ENCODE measurements at regions of chr7 and their contacts with region 1.

Region 1: GRCh38 chr7:12686894-12687717 is at the start of gene ARL4A:
- DNase-seq: peak; percentile 86 to 90 (median 88)
- H3K4me3 ChIP-seq: peak within 1 kb of the TSS; percentile 61 to 89
- H3K4me3 Mint-ChIP-seq: peak within 1 kb of the TSS; percentile 94 to 100 (median 96)
- H3K27ac ChIP-seq: peak within 1 kb of the TSS; percentile 94
- H3K27ac Mint-ChIP-seq: peak within 1 kb of the TSS; percentile 91 to 99 (median 97)
- H3K4me1 ChIP-seq: peaks cover 21% of the 10 kb centered on the region
- H3K4me1 Mint-ChIP-seq: peaks cover 24 to 57% (median 36%) of the 10 kb centered on the region in 4 donors
- H3K27me3 ChIP-seq: no peaks in the 10 kb centered on the region
- H3K27me3 Mint-ChIP-seq: no peaks in the 10 kb centered on the region
- total RNA-seq, gene ARL4A: 11.6 to 12.9 TPM

Region 2: GRCh38 chr7:12211054-12211710 is 475.9 kb before region 1 on chr7 and contains the start of gene TMEM106B:
- CTCF ChIA-PET with region 1: no interaction called
- POLR2A ChIA-PET with region 1: interaction called, 4 read pairs
- intact Hi-C with region 1: loop called (anchors 2 kb)
- DNase-seq: peak; percentile 95 to 98 (median 98)
- H3K4me3 ChIP-seq: peak within 1 kb of the TSS; percentile 70 to 94
- H3K4me3 Mint-ChIP-seq: peak within 1 kb of the TSS; percentile 92 to 100 (median 98)
- H3K27ac ChIP-seq: peak within 1 kb of the TSS; percentile 98
- H3K27ac Mint-ChIP-seq: peak within 1 kb of the TSS; percentile 95 to 100 (median 100)
- H3K4me1 ChIP-seq: peaks cover 46% of the 10 kb centered on the region
- H3K4me1 Mint-ChIP-seq: peaks cover 23 to 40% (median 33%) of the 10 kb centered on the region in 4 donors
- H3K27me3 ChIP-seq: no peaks in the 10 kb centered on the region
- H3K27me3 Mint-ChIP-seq: peaks cover 0 to 2% of the 10 kb centered on the region in 2 donors
- total RNA-seq, gene TMEM106B: 56.9 to 62.2 TPM

Region 3: DNA sequence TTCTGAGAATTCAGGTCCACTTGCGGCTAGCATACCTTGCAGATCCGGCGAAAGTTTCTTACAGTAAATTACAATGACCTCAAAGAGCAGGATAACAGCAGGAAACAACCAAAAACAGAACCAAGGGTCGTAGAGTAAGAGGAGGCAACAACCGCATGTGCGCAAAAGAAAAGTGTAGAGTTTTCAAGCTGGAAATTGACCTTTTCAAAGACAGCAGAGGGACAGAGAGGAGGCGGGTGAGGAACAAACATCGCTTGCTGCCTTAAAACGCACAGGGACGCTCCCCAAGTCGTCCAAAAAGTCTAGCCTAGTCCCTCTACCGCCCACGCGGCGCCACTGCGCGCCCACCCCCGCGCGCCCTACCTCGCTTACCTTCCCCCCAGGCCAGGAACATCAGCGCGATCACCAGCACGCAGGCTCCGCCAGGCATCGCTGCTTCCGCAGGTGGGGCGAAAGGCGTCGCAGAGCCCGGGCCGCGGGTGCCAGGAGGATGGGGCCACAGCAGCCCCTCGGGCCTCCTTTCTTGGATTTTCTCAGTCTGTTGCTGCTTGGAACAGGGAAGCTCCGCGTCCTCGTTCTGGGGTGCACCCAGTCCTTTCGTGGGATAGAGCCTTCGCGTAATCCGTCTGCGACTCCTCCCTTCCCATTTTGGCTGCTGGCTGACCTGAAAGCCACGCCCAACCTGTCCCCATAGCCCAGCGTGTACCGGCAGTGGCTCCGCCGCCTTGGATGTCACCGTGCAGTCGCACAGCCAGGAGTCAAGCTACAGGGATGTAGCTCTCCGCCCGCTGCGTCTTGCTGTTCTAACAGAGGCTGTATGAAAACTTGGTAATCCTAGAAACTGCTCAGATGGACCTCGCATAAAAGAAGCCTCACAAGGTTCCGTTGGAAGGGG is 283.6 kb before region 1 on chr7 and contains the start of gene VWDE:
- CTCF ChIA-PET with region 1: no interaction called
- POLR2A ChIA-PET with region 1: no interaction called
- intact Hi-C with region 1: loop called (anchors 1 kb)
- DNase-seq: peak; percentile 31 to 70 (median 44)
- H3K4me3 ChIP-seq: peak within 1 kb of the TSS; percentile 38 to 54
- H3K4me3 Mint-ChIP-seq: peak within 1 kb of the TSS; percentile 82 to 95 (median 90)
- H3K27ac ChIP-seq: peak within 1 kb of the TSS; percentile 29
- H3K27ac Mint-ChIP-seq: peak within 1 kb of the TSS; percentile 30 to 92 (median 82)
- H3K4me1 ChIP-seq: peaks cover 13% of the 10 kb centered on the region
- H3K4me1 Mint-ChIP-seq: peaks cover 12 to 29% (median 17%) of the 10 kb centered on the region in 4 donors
- H3K27me3 ChIP-seq: no peaks in the 10 kb centered on the region
- H3K27me3 Mint-ChIP-seq: peaks cover 6 to 7% of the 10 kb centered on the region in 2 donors
- total RNA-seq, gene VWDE: 8.9 to 9.0 TPM

Region 4: GRCh38 chr7:12638851-12639467 is 48.1 kb before region 1 on chr7:
- CTCF ChIA-PET with region 1: interaction called, 10 read pairs
- POLR2A ChIA-PET with region 1: interaction called, 5 read pairs
- intact Hi-C with region 1: loop called (anchors 1 kb)
- DNase-seq: peak in 4 of 5 donors; percentile 47 to 59 (median 54)
- H3K4me3 ChIP-seq: no peak overlapping the region
- H3K4me3 Mint-ChIP-seq: peak overlapping the region in 1 of 8 donors; percentile 22
- H3K27ac ChIP-seq: no peak overlapping the region
- H3K27ac Mint-ChIP-seq: no peak overlapping the region
- H3K4me1 ChIP-seq: peaks cover 17% of the 10 kb centered on the region
- H3K4me1 Mint-ChIP-seq: peaks cover 14 to 34% (median 20%) of the 10 kb centered on the region in 4 donors
- H3K27me3 ChIP-seq: no peaks in the 10 kb centered on the region
- H3K27me3 Mint-ChIP-seq: peaks cover 0 to 2% of the 10 kb centered on the region in 2 donors

Region 5: GRCh38 chr7:12715372-12716133 is 28.4 kb after region 1 on chr7:
- CTCF ChIA-PET with region 1: interaction called, 14 read pairs
- POLR2A ChIA-PET with region 1: interaction called, 10 read pairs
- intact Hi-C with region 1: no loop called
- DNase-seq: no peak
- H3K4me3 ChIP-seq: no peak overlapping the region
- H3K4me3 Mint-ChIP-seq: peak overlapping the region in 3 of 8 donors; percentile 40 to 58 (median 57)
- H3K27ac ChIP-seq: no peak overlapping the region
- H3K27ac Mint-ChIP-seq: peak overlapping the region in 3 of 7 donors; percentile 42 to 73 (median 48)
- H3K4me1 ChIP-seq: peaks cover 25% of the 10 kb centered on the region
- H3K4me1 Mint-ChIP-seq: peaks cover 12 to 28% (median 14%) of the 10 kb centered on the region in 4 donors
- H3K27me3 ChIP-seq: no peaks in the 10 kb centered on the region
- H3K27me3 Mint-ChIP-seq: no peaks in the 10 kb centered on the region

Region 6: DNA sequence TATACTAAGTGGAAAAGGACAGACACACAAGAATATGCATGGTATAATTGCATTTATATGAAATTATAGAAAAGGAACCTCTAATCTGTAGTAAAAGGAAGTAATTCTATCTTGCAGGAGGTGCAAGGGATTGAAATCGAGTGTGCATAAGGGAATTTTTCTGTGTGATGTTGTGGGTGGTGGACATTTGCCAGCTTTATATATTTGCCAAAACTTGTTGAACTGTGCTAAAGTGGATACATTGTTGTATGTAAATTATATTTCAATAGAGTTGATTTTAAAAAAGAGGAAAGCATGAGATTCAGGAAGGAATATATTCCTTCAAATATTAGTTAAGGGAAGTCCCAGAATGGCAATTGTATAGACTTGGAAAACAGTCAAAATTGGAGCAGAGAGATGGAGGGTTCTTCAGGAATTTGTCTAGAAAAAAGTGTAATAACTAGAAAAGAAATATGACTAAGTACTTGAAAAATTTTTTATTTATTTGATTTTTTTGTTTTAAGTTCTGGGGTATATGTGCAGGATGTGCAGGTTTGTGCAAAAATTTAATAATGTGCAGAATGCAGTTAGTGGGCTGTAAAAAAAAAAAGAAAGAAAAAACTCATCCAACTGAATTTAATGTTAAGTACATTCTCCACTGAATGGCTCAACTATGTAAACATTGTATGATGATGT is 96.5 kb after region 1 on chr7:
- CTCF ChIA-PET with region 1: no interaction called
- POLR2A ChIA-PET with region 1: no interaction called
- intact Hi-C with region 1: no loop called
- DNase-seq: no peak
- H3K4me3 ChIP-seq: no peak overlapping the region
- H3K4me3 Mint-ChIP-seq: no peak overlapping the region
- H3K27ac ChIP-seq: no peak overlapping the region
- H3K27ac Mint-ChIP-seq: peak overlapping the region in 1 of 7 donors; percentile 17
- H3K4me1 ChIP-seq: no peaks in the 10 kb centered on the region
- H3K4me1 Mint-ChIP-seq: no peaks in the 10 kb centered on the region
- H3K27me3 ChIP-seq: no peaks in the 10 kb centered on the region
- H3K27me3 Mint-ChIP-seq: peaks cover 0 to 2% of the 10 kb centered on the region in 2 donors

Region 7: DNA sequence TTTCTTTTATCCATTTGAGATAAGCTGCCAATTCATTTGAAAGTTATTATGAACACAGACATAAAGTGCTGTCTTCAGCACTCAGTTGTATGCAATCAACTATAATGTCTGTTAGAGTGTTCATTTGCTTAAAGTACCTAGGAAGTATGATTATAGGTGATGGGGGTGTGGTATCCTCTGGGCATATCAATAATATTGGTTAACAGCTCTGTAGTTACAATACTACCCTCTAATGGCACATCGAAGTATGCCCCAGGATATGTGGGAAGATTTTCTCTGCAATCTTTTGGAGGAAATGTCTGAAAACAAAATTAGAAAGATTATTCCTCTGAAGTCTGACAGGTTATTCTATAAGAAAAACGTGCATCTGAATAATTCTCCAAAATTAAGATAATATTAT is 430.0 kb after region 1 on chr7:
- CTCF ChIA-PET with region 1: interaction called, 3 read pairs
- POLR2A ChIA-PET with region 1: no interaction called
- intact Hi-C with region 1: loop called (anchors 5 kb)
- DNase-seq: no peak
- H3K4me3 ChIP-seq: no peak overlapping the region
- H3K4me3 Mint-ChIP-seq: no peak overlapping the region
- H3K27ac ChIP-seq: no peak overlapping the region
- H3K27ac Mint-ChIP-seq: no peak overlapping the region
- H3K4me1 ChIP-seq: no peaks in the 10 kb centered on the region
- H3K4me1 Mint-ChIP-seq: no peaks in the 10 kb centered on the region
- H3K27me3 ChIP-seq: no peaks in the 10 kb centered on the region
- H3K27me3 Mint-ChIP-seq: peaks cover 0 to 3% of the 10 kb centered on the region in 2 donors

Region 8: GRCh38 chr7:13262929-13263530 is 575.9 kb after region 1 on chr7:
- CTCF ChIA-PET with region 1: interaction called, 61 read pairs
- POLR2A ChIA-PET with region 1: no interaction called
- intact Hi-C with region 1: loop called (anchors 1 kb)
- DNase-seq: peak in 4 of 5 donors; percentile 40 to 47 (median 46)
- H3K4me3 ChIP-seq: no peak overlapping the region
- H3K4me3 Mint-ChIP-seq: no peak overlapping the region
- H3K27ac ChIP-seq: no peak overlapping the region
- H3K27ac Mint-ChIP-seq: no peak overlapping the region
- H3K4me1 ChIP-seq: no peaks in the 10 kb centered on the region
- H3K4me1 Mint-ChIP-seq: no peaks in the 10 kb centered on the region
- H3K27me3 ChIP-seq: no peaks in the 10 kb centered on the region
- H3K27me3 Mint-ChIP-seq: peaks cover 5 to 7% of the 10 kb centered on the region in 2 donors

Measured in CD4-positive, alpha-beta memory T cell (primary cell).